Prostate gland (tissue), 2 donors: ENCODE measurements at regions of chr12 and their contacts with region 1.

Region 1: DNA sequence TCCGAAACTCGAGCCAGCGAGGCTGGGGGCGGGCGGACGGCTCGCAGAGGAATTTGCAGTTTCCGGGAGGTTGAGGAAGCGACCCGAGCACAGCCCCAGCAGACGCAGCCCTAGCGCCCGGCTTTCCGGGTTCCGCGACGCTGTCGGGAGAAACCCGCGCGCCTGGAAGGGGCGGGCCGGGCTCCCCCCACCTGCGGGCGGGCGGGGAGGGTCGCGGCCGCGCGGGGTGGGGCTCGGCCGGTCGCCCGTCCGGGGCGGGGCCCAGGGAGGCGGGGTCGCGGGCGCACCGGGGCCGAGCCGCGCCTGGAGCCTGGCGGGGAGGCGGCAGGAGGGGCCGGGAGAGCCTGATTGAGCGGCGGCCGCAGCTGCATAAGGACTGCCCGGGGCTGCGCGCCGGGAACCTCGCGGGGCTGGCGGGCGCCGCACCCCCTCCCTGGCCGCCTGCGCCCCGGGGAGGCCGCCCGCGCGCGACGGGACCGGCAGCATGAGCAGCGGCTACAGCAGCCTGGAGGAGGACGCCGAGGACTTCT is at the start of gene RASSF3:
- DNase-seq: peak; percentile 69
- H3K4me3 ChIP-seq: peak within 1 kb of the TSS; percentile 82 to 88
- H3K27ac ChIP-seq: peak within 1 kb of the TSS; percentile 88 to 91
- H3K4me1 ChIP-seq: no peaks in the 10 kb centered on the region
- H3K27me3 ChIP-seq: no peaks in the 10 kb centered on the region
- CTCF ChIP-seq: no peak
- POLR2A ChIP-seq: peak; percentile 23
- total RNA-seq, gene RASSF3: 40.6 to 55.7 TPM

Region 2: DNA sequence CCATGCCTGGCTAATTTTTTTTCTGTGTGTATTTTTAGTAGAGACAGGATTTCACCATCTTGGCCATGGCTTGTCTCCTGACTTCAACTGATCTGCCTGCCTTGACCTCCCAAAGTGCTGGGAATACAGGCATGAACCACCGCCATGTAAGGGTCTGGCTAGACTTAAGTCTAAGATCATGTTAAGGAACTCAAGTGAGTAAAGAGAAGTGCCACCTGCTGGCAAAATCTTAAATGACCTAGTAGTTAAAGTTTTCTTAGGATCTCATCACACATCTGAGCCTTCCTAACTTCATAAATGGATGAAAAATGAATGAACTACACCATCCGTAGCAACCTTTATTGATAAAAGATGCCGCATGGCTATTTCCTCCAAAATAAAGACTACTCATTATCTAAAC is 218.0 kb before region 1 on chr12:
- intact Hi-C with region 1: no loop called
- DNase-seq: no peak
- H3K4me3 ChIP-seq: no peak overlapping the region
- H3K27ac ChIP-seq: no peak overlapping the region
- H3K4me1 ChIP-seq: no peaks in the 10 kb centered on the region
- H3K27me3 ChIP-seq: no peaks in the 10 kb centered on the region
- CTCF ChIP-seq: no peak
- POLR2A ChIP-seq: no peak

Region 3: DNA sequence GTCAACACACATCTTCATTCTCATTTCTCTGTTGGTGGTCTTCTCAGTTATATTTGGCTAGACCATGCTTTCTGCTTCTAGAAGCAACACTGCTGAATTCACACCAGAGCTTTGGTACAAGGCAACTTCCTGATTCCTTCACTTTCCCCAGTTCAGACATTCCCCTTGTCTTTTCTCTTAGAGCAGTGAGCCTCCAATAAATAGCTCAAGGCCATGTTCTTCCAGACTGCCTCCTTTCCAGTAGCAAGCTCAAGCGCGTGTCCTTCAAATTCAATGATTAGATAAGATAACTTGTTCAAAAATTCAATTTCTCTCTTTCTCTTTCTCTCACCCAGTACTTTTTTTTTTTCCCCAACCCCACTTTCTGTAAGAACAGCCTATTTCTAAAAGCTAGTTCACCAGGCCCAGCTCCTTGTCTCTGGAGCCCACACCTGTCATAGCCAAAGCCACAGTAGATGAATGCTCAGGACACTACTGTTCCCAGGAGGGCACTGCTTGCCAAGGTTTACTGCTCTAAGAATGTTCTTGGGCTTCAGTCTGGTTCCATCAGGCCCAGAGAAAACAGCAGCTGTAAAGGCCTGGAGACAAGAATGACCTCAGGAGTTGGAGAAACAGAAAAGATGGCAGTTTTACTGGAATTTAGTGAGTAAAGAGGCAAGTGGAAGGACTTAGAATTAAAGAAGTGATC is 140.6 kb before region 1 on chr12:
- intact Hi-C with region 1: no loop called
- DNase-seq: no peak
- H3K4me3 ChIP-seq: no peak overlapping the region
- H3K27ac ChIP-seq: no peak overlapping the region
- H3K4me1 ChIP-seq: no peaks in the 10 kb centered on the region
- H3K27me3 ChIP-seq: no peaks in the 10 kb centered on the region
- CTCF ChIP-seq: no peak
- POLR2A ChIP-seq: no peak

Region 4: DNA sequence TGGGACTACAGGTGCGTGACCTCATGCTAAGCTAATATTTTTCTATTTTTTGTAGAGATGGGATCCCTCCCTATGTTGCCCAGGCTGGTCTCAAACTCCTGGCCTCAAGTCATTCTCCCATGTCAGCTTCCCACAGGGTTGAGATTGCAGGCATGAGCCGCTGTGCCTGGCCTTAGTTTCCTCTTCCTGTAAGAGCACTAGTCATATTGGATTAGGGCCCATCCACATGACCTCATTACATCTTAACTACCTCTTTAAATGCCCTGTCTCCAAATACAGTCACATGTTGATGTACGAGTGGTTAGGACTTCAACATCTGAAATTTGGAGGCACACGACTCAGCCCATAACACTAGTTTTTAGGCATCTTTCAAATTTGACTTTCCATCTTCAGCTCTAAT is 72.1 kb before region 1 on chr12:
- intact Hi-C with region 1: no loop called
- DNase-seq: no peak
- H3K4me3 ChIP-seq: no peak overlapping the region
- H3K27ac ChIP-seq: no peak overlapping the region
- H3K4me1 ChIP-seq: no peaks in the 10 kb centered on the region
- H3K27me3 ChIP-seq: no peaks in the 10 kb centered on the region
- CTCF ChIP-seq: no peak
- POLR2A ChIP-seq: no peak

Region 5: GRCh38 chr12:64551698-64552097 is 58.5 kb before region 1 on chr12:
- intact Hi-C with region 1: loop called (anchors 5 kb)
- DNase-seq: no peak
- H3K4me3 ChIP-seq: no peak overlapping the region
- H3K27ac ChIP-seq: peak overlapping the region in 1 of 2 donors; percentile 4
- H3K4me1 ChIP-seq: peaks cover 6% of the 10 kb centered on the region
- H3K27me3 ChIP-seq: no peaks in the 10 kb centered on the region
- CTCF ChIP-seq: no peak
- POLR2A ChIP-seq: no peak

Region 6: GRCh38 chr12:64672925-64673409 is 62.8 kb after region 1 on chr12:
- intact Hi-C with region 1: loop called (anchors 5 kb)
- DNase-seq: no peak
- H3K4me3 ChIP-seq: no peak overlapping the region
- H3K27ac ChIP-seq: peak overlapping the region in 1 of 2 donors; percentile 30
- H3K4me1 ChIP-seq: peaks cover 5% of the 10 kb centered on the region
- H3K27me3 ChIP-seq: no peaks in the 10 kb centered on the region
- CTCF ChIP-seq: no peak
- POLR2A ChIP-seq: no peak

Region 7: DNA sequence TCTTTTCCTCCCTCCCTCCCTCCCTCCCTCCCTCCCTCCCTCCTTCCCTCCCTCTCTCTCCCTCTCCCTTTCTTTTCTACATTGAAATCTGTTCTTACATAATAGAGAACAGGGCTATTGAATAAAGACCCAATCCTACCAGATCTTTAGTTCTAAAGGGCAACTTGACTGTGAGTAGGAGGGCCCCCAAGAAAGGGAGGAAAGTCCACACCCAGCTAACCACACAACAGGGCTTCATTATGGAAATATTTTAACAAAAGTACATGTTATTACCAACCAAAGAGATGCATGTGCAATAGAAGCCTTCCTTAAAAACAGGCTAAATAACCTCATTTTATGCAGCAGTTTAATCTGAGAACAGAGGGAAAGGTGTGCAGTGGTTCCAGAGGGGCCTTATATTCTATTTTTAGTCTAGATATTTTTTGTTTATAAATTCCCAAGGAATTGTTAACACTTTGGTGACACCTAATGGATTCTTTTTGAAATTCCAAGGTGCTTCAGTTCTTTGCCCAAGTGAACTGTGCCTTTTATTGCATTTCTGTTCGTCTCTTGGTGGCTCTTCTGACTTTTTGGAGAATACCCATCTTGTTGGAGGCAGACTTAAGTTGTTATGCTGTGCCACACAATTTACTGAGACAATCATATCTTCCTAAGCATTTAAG is 86.0 kb after region 1 on chr12:
- intact Hi-C with region 1: loop called (anchors 5 kb)
- DNase-seq: no peak
- H3K4me3 ChIP-seq: no peak overlapping the region
- H3K27ac ChIP-seq: no peak overlapping the region
- H3K4me1 ChIP-seq: no peaks in the 10 kb centered on the region
- H3K27me3 ChIP-seq: no peaks in the 10 kb centered on the region
- CTCF ChIP-seq: peak in 2 of 4 experiments; percentile 44 to 55
- POLR2A ChIP-seq: no peak